ENCODE measurements at regions of chr14 and their contacts with region 1.

Region 1: GRCh38 chr14:75427482-75428229 is at the start of gene JDP2:
- DNase-seq: peak; percentile 77
- ATAC-seq: peak; percentile 53
- H3K4me3 ChIP-seq: peak within 1 kb of the TSS; percentile 45 to 86 (median 72)
- H3K4me3 Mint-ChIP-seq: peak within 1 kb of the TSS; percentile 94
- H3K27ac ChIP-seq: peak within 1 kb of the TSS; percentile 86
- H3K27ac Mint-ChIP-seq: peak within 1 kb of the TSS; percentile 99
- H3K4me1 ChIP-seq: peaks cover 23 to 30% of the 10 kb centered on the region in 2 donors
- H3K4me1 Mint-ChIP-seq: peaks cover 38% of the 10 kb centered on the region
- H3K27me3 ChIP-seq: no peaks in the 10 kb centered on the region
- H3K27me3 Mint-ChIP-seq: no peaks in the 10 kb centered on the region
- CTCF ChIP-seq: no peak
- total RNA-seq, gene JDP2: 17.0 and 17.9 TPM in 2 replicates

Region 2: DNA sequence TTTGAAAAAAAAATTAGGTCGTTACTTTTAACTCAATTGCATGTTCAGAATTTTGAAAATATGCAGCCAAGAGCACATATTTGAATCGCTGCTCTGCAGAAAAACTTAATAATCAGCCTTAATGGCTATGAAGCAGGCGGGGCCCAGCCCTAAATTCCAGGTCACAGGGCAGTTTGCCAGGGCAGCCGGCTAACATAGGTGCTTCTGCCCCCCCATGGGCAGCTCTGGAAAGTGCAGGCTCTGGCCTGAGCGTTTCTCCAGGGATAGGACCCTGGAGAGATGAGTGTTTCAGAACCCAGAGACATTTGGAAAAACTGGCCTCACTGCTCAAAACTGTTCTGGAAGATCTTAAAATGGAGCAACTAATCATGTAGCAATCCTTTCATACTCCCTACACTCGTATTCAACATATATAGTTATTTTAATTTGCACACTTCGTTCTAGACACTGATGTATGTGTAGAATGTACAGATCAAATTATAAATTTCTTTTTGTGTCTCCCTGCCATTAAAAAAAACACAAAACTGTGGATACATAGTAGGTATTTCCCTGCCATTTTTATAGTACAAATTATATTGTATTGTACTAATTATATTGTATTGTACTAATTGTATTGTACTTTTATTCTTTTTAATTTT is 1602.0 kb before region 1 on chr14:
- CTCF ChIA-PET with region 1: no interaction called
- POLR2A ChIA-PET with region 1: no interaction called
- intact Hi-C with region 1: no loop called
- DNase-seq: peak; percentile 81
- ATAC-seq: peak; percentile 99
- H3K4me3 ChIP-seq: no peak overlapping the region
- H3K4me3 Mint-ChIP-seq: no peak overlapping the region
- H3K27ac ChIP-seq: no peak overlapping the region
- H3K27ac Mint-ChIP-seq: no peak overlapping the region
- H3K4me1 ChIP-seq: no peaks in the 10 kb centered on the region
- H3K4me1 Mint-ChIP-seq: peaks cover 4% of the 10 kb centered on the region
- H3K27me3 ChIP-seq: no peaks in the 10 kb centered on the region
- H3K27me3 Mint-ChIP-seq: no peaks in the 10 kb centered on the region
- CTCF ChIP-seq: peak; percentile 93

Region 3: GRCh38 chr14:75411214-75411540 is 16.5 kb before region 1 on chr14:
- CTCF ChIA-PET with region 1: no interaction called
- POLR2A ChIA-PET with region 1: no interaction called
- intact Hi-C with region 1: loop called (anchors 2 kb)
- DNase-seq: no peak
- ATAC-seq: no peak
- H3K4me3 ChIP-seq: no peak overlapping the region
- H3K4me3 Mint-ChIP-seq: no peak overlapping the region
- H3K27ac ChIP-seq: no peak overlapping the region
- H3K27ac Mint-ChIP-seq: no peak overlapping the region
- H3K4me1 ChIP-seq: no peaks in the 10 kb centered on the region
- H3K4me1 Mint-ChIP-seq: no peaks in the 10 kb centered on the region
- H3K27me3 ChIP-seq: no peaks in the 10 kb centered on the region
- H3K27me3 Mint-ChIP-seq: no peaks in the 10 kb centered on the region
- CTCF ChIP-seq: no peak

Region 4: DNA sequence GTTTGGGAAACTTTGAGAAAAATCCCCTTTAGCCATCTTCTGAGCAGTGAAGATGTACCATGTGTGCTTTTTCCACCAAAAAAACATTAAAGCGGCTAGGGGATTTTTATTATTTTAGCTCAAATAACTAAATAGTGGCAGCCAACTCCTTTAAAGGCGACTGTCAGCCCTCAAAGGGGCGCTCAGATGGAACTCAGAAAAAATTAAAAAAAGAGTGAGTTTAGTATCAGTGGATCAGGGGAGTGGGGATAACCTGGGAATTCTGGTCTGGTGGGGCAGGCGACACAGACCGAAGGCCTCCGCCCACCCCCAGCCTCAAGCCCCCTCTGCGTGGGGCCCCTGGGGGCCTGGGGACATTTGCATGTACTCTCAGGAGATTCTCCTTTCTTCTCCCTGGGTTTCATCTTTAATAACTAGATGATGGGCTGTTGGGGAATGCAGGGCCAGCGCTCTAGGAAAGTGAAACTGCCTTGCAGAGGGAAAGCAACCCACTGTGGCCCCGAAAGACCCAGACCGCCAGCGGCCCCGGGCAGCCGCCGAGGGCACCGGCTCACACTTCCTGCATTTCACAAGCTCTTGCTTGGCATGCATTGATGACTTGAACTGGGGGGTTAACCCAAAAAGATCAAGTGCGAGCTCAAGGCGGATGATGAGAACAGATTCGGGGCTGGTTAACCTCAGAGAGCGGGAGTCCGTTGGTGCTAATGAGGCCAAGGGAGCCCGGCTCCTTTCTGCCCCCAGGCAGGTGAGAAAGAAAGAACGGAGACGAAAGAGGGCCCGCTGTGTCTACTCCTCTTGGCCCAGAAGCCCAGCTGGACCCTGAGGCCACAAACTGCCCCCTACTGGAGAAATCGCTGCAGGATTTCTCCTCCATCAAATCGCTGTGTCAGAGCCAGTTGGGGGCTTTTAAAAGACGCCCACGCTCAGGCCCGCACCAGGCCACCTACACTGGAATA is 87.3 kb after region 1 on chr14:
- CTCF ChIA-PET with region 1: no interaction called
- POLR2A ChIA-PET with region 1: no interaction called
- intact Hi-C with region 1: loop called (anchors 10 kb)
- DNase-seq: peak; percentile 78
- ATAC-seq: peak; percentile 54
- H3K4me3 ChIP-seq: peak overlapping the region; percentile 29 to 62 (median 45)
- H3K4me3 Mint-ChIP-seq: peak overlapping the region; percentile 91
- H3K27ac ChIP-seq: peak overlapping the region; percentile 15 to 55
- H3K27ac Mint-ChIP-seq: peak overlapping the region; percentile 95
- H3K4me1 ChIP-seq: peaks cover 29 to 36% of the 10 kb centered on the region in 2 donors
- H3K4me1 Mint-ChIP-seq: peaks cover 47% of the 10 kb centered on the region
- H3K27me3 ChIP-seq: no peaks in the 10 kb centered on the region
- H3K27me3 Mint-ChIP-seq: no peaks in the 10 kb centered on the region
- CTCF ChIP-seq: peak; percentile 74